ENCODE measurements at regions of chr6 and their contacts with region 1.

Region 1: GRCh38 chr6:106300944-106301343 is 24.6 kb downstream of the ATG5 start:
- DNase-seq: peak; percentile 10
- ATAC-seq: 0 out of 2 replicates have a peak, but pooled peaks have one; percentile 72
- H3K4me3 ChIP-seq: no peak overlapping the region
- H3K27ac ChIP-seq: no peak overlapping the region
- H3K4me1 ChIP-seq: peaks cover 5% of the 10 kb centered on the region; the same call in 1 of the 2 replicates
- H3K27me3 ChIP-seq: no peaks in the 10 kb centered on the region
- CTCF ChIP-seq: peak; percentile 67; the same call in 1 of the 2 replicates

Region 2: DNA sequence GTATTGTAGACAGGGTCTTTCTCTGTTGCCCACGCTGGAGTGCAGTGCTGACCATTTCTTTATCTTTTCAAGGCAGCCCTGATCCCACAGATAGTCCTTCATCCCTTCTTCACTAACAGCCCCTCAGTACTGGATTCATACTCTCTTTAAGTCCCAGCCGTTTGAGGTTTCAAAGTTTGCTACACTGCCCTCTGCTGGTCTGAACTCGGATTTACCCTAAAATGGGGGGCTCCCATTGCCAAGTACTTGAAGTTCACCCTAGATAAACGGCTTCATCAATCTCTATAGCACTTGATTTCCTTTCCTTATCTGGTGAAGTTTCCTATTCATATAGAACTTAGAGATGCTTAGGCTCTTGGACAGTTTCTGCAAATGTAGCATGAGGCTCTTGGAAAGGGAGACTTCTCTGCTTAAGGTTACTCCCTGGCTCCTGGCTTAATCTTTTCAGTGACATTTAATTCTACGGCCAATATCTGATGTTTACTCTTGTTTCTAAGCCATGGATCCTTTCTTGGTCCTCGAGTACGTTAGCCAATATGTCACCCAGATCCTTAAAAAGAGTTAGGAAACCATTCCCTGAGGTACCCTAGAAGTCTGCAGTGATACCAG is 876.7 kb before region 1 on chr6:
- CTCF ChIA-PET with region 1: no interaction called
- POLR2A ChIA-PET with region 1: no interaction called
- in situ Hi-C with region 1: no loop called
- intact Hi-C with region 1: loop called (anchors 10 kb)
- DNase-seq: no peak
- ATAC-seq: peak; percentile 87
- H3K4me3 ChIP-seq: no peak overlapping the region
- H3K27ac ChIP-seq: no peak overlapping the region
- H3K4me1 ChIP-seq: no peaks in the 10 kb centered on the region
- H3K27me3 ChIP-seq: no peaks in the 10 kb centered on the region
- CTCF ChIP-seq: peak; percentile 88

Region 3: DNA sequence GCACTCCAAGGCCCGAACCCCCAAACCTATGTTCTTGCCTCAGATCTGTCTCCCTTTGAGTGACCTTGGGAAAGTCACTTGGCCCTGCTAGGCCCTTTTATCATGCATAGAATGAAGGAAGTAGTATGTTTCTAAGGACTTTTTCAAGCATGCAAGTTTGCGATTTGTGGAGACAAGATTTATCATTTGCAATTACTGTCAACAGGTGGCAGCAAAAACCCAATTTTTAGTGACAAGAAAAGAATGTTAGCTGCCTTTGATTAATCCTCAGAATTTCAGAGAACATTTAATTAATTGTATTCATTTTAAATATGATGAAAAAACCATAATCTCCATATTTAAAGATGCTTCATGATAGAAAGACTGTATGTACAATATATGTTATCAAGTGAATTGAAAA is 869.7 kb before region 1 on chr6:
- CTCF ChIA-PET with region 1: interaction called, 13 read pairs
- POLR2A ChIA-PET with region 1: no interaction called
- in situ Hi-C with region 1: no loop called
- intact Hi-C with region 1: loop called (anchors 10 kb)
- DNase-seq: no peak
- ATAC-seq: no peak
- H3K4me3 ChIP-seq: no peak overlapping the region
- H3K27ac ChIP-seq: peak overlapping the region; percentile 60
- H3K4me1 ChIP-seq: peaks cover 15% of the 10 kb centered on the region
- H3K27me3 ChIP-seq: no peaks in the 10 kb centered on the region
- CTCF ChIP-seq: peak; percentile 77

Region 4: DNA sequence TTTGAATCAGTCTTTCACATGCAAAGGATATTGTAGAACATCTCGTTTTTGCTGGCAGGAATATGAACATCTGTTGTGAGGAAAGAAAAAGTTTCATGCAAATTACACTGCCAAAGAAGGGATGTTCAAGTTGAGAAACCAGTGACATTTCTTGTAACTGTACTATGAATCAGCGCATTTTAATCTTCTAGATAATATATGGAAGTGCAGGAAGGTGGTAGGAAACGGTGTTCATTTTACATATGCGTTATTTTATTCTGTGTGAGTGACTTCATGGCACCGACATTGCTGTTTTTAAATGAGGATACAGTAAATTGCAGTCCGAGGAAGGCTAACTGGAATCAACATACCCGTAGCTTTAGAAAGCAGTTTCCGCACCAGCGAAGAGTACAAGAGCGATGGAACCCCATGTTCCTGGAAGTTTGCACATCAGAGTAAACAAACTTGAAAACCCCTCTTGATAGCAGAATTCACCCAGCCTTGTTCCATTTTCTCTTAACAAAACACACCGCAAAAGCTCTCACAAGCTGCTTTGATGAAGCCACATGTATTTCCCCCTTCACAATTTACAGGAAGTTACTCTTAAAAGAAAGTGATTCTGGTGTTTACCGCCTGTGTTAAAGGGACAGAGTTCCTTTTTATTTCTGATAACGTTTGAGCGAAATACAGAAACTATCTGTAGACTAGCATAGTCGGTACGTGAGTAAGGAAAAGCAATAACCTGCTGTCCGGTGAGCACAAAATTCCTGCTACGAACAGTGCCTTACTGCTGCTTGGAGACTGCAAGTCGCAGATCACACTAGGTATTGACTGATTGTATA is 203.3 kb before region 1 on chr6:
- CTCF ChIA-PET with region 1: no interaction called
- POLR2A ChIA-PET with region 1: no interaction called
- in situ Hi-C with region 1: no loop called
- intact Hi-C with region 1: loop called (anchors 10 kb)
- DNase-seq: no peak
- ATAC-seq: peak; percentile 51; the same call in 1 of the 2 replicates
- H3K4me3 ChIP-seq: peak overlapping the region; percentile 38 to 48
- H3K27ac ChIP-seq: peak overlapping the region; percentile 57
- H3K4me1 ChIP-seq: peaks cover 23% of the 10 kb centered on the region
- H3K27me3 ChIP-seq: no peaks in the 10 kb centered on the region; the same call in 1 of the 2 replicates
- CTCF ChIP-seq: no peak

Region 5: GRCh38 chr6:106397431-106397830 is 96.5 kb after region 1 on chr6:
- CTCF ChIA-PET with region 1: no interaction called
- POLR2A ChIA-PET with region 1: no interaction called
- in situ Hi-C with region 1: no loop called
- intact Hi-C with region 1: no loop called
- DNase-seq: no peak
- ATAC-seq: no peak
- H3K4me3 ChIP-seq: no peak overlapping the region
- H3K27ac ChIP-seq: no peak overlapping the region
- H3K4me1 ChIP-seq: no peaks in the 10 kb centered on the region
- H3K27me3 ChIP-seq: peaks cover 14% of the 10 kb centered on the region; the same call in 1 of the 2 replicates
- CTCF ChIP-seq: no peak